Adrenal gland (tissue), 19 donors: ENCODE measurements at regions of chr20 and their contacts with region 1.

Region 1: DNA sequence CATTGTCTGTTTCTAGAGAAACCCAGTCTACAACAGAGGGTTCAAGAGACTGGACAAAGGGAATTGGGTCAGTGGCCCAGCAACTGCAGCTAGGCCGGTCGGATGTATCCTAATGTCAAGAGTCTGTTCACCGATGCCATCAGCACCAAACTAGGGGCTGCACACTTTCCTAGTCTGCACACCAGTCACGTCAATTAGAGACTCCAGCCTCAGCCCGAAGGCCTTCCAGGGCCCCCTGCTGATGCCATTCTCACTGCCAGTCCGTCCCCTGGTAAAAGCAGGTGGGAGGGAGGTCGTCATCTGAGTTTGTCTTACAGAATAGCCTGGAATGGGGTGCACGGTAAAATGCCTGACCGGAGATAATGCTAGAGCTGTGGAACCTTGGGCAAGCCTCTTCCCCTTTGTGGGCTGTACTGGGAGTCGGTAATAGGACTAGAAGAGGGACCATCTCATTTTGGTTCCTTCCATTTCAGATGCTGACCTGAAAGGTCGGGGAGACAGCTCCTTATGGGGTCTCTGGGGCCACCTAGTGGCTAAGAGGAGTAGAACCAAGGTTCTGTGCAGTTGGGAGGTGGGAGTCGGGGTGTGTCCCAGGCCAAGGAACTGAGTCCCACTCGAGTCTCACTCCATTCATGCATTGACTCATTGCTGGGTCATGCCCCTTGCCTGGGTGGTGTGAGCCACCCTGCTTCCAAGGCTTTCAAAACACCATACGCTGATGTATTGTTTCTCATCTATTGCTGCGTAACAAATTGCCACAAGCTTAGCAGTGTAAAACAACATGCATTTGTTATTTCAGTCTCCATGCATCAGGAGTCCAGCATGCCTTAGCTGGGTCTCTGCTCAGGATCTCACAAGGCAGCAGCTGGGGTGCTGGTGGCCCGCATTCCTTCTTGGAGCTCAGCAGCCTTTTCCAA is 5.1 kb downstream of the SOX12 start:
- DNase-seq: peak; percentile 51 to 82 (median 67)
- H3K4me3 ChIP-seq: no peak overlapping the region
- H3K27ac ChIP-seq: peak overlapping the region in 2 of 5 donors; percentile 7 to 67
- H3K4me1 ChIP-seq: peaks cover 20 to 31% of the 10 kb centered on the region in 2 donors
- H3K27me3 ChIP-seq: no peaks in the 10 kb centered on the region
- CTCF ChIP-seq: peak; percentile 63 to 86 (median 82)
- POLR2A ChIP-seq: no peak

Region 2: DNA sequence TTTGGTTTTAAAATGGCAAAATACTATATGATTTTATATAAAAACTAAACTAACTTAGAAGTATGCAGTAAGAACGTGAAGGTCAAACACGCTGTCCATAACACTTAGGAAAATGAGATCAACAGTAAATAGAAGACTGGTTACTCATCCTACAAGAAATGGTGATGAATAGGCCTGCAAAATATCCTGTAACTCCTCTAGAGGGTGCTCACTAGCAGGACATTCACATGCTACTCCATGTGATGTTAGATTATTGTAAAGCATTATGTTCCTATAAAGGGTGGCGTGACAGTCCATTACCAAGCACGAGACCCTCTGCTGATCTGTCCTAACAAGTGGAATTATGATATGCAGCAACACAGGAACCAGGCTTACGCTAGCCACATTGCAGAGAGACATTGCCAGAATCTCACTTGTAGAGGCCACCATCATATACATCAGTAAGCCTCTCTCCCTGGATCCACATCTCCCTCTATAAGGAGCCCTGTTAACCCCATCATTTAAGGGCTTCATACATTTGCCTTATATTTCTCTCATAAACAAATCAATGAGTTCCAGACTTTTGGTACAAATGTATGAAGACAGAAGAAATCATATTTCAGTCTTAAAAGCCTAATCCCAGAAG is 121.4 kb before region 1 on chr20:
- intact Hi-C with region 1: loop called in 1 of 2 experiments (anchors 10 kb)
- DNase-seq: peak in 4 of 7 donors; percentile 14 to 26 (median 20)
- H3K4me3 ChIP-seq: no peak overlapping the region
- H3K27ac ChIP-seq: no peak overlapping the region
- H3K4me1 ChIP-seq: no peaks in the 10 kb centered on the region
- H3K27me3 ChIP-seq: no peaks in the 10 kb centered on the region
- CTCF ChIP-seq: peak; percentile 22 to 68 (median 62)
- POLR2A ChIP-seq: no peak

Region 3: GRCh38 chr20:227439-228105 is 102.9 kb before region 1 on chr20:
- intact Hi-C with region 1: no loop called
- DNase-seq: no peak
- H3K4me3 ChIP-seq: no peak overlapping the region
- H3K27ac ChIP-seq: no peak overlapping the region
- H3K4me1 ChIP-seq: no peaks in the 10 kb centered on the region
- H3K27me3 ChIP-seq: peaks cover 7% of the 10 kb centered on the region
- CTCF ChIP-seq: no peak
- POLR2A ChIP-seq: no peak

Region 4: DNA sequence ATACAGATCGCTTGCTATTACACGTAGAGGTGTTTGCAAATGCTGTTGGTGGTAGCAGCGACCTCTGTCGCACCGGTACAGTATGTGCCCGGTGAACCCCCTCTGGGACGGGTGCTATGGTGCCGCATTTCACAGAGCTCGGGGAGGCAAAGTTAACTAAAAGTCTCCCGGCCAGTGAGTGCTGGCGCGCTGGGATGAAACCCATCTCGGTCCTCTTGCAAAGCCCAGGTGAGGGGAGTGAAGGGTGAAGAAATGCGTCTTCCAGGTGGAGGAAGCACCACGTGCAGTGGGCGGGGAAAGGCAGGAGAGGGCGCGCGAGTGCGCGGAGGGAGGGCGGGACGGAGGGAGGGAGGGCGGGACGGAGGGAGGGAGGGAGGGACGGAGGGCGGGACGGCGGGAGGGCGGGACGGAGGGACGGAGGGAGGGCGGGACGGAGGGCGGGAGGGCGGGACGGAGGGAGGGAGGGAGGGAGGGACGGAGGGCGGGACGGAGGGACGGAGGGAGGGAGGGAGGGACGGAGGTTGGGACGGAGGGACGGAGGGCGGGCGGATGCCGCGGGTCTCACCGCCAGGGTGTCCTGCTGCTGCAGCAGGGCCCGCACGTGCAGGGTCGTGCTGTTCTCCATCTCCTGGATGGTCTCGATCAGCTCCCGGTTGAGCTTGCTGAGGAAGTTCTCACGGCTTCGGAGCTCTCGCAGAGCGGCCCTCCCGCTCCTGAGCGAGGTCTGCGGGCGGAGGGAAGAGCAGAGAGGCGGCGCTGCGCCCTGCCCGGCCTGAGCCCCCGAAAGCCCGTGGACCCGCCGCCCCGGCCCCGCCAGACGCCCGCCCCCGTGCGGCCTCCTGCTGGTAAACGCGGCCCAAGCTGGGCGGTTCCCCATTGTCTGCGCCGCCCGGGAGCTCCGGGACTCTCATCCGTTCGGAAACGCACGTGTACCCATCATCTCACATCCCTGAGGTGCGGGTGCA is 51.6 kb before region 1 on chr20:
- intact Hi-C with region 1: loop called (anchors 5 to 10 kb)
- DNase-seq: peak in 4 of 7 donors; percentile 51 to 71 (median 63)
- H3K4me3 ChIP-seq: peak overlapping the region in 1 of 4 donors; percentile 48
- H3K27ac ChIP-seq: peak overlapping the region in 1 of 5 donors; percentile 49
- H3K4me1 ChIP-seq: no peaks in the 10 kb centered on the region
- H3K27me3 ChIP-seq: no peaks in the 10 kb centered on the region
- CTCF ChIP-seq: peak in 3 of 6 experiments; percentile 12 to 34 (median 16)
- POLR2A ChIP-seq: no peak

Region 5: GRCh38 chr20:289693-290083 is 40.8 kb before region 1 on chr20:
- intact Hi-C with region 1: loop called in 1 of 2 experiments (anchors 10 kb)
- DNase-seq: no peak
- H3K4me3 ChIP-seq: peak overlapping the region in 3 of 4 donors; percentile 50 to 72 (median 54)
- H3K27ac ChIP-seq: peak overlapping the region in 4 of 5 donors; percentile 56 to 84 (median 74)
- H3K4me1 ChIP-seq: peaks cover 10 to 15% of the 10 kb centered on the region in 2 donors
- H3K27me3 ChIP-seq: no peaks in the 10 kb centered on the region
- CTCF ChIP-seq: no peak
- POLR2A ChIP-seq: no peak